ENCODE measurements at regions of chr17 and their contacts with region 1.

Region 1: GRCh38 chr17:47465165-47465564 is 65.7 kb upstream of the NPEPPS start:
- DNase-seq: no peak
- H3K4me3 ChIP-seq: no peak overlapping the region
- H3K27ac ChIP-seq: no peak overlapping the region
- H3K4me1 ChIP-seq: no peaks in the 10 kb centered on the region
- H3K27me3 ChIP-seq: no peaks in the 10 kb centered on the region
- CTCF ChIP-seq: no peak
- POLR2A ChIP-seq: no peak

Region 2: DNA sequence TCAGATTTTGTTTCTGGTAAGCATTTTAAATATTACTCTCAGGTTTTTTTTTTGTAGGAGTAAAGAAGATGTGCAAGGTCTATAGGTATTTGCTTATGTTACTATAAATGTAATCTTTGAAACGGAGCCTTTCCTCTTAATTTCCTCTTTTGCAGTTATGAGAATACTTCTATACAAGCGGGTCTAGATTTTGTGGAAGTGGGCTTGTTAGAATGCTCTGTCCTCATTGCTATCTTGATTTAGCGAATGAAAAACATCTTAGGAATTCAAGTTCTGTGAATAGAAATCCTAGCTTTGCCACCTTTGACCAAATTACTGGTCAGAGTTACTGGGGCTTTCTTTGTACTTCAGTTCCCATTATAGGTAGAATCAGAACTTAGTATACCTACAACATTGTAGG is 61.2 kb before region 1 on chr17:
- intact Hi-C with region 1: loop called (anchors 10 kb)
- DNase-seq: no peak
- H3K4me3 ChIP-seq: no peak overlapping the region
- H3K27ac ChIP-seq: no peak overlapping the region
- H3K4me1 ChIP-seq: peaks cover 0 to 3% (median 0%) of the 10 kb centered on the region in 6 donors
- H3K27me3 ChIP-seq: no peaks in the 10 kb centered on the region
- CTCF ChIP-seq: no peak
- POLR2A ChIP-seq: no peak